ENCODE measurements at regions of chr9 and their contacts with region 1.

Region 1: GRCh38 chr9:115013998-115014397 is 83.6 kb upstream of the TNFSF8 start:
- DNase-seq: peak; percentile 57 to 84 (median 79)
- ATAC-seq: peak; percentile 88
- H3K4me3 ChIP-seq: no peak overlapping the region
- H3K4me3 Mint-ChIP-seq: peak overlapping the region in 1 of 10 donors; percentile 24
- H3K27ac ChIP-seq: no peak overlapping the region
- H3K27ac Mint-ChIP-seq: peak overlapping the region in 2 of 9 donors; percentile 12 to 79
- H3K4me1 ChIP-seq: peaks cover 0 to 4% of the 10 kb centered on the region in 2 donors
- H3K4me1 Mint-ChIP-seq: peaks cover 5 to 59% (median 12%) of the 10 kb centered on the region in 7 donors
- H3K27me3 ChIP-seq: no peaks in the 10 kb centered on the region
- H3K27me3 Mint-ChIP-seq: peaks cover 4 to 14% (median 7%) of the 10 kb centered on the region in 5 donors

Region 2: DNA sequence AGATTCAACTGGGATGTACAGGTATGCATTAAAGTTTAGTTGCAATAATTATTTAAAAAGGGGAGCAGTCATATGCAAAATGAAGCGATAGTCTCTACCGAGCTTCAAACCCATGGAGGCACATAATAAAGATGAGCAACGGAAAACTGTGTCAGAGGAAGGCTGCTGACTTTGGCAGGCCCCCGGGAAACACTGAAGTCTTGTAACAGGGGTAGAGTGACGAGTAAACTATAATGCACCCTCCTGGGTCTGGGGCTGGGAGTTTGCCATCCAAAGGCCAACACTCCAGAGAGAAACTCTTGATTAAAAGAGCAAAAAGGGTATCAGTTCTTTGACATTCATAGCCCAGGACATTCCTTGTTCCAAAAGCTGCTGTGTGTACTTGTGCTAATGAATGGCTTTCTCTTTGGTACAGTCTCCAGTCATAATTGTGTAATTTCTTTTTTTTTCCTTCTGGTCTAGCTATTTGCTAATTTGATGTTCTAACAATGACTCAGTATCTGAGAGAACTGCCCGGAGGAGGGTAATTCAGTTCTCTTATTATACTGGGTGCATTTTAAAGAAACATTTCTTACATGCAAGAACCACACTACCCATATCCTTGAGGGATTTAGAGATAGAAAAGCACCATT is 44.8 kb after region 1 on chr9:
- CTCF ChIA-PET with region 1: no interaction called
- POLR2A ChIA-PET with region 1: no interaction called
- intact Hi-C with region 1: no loop called
- DNase-seq: no peak
- ATAC-seq: no peak
- H3K4me3 ChIP-seq: no peak overlapping the region
- H3K4me3 Mint-ChIP-seq: no peak overlapping the region
- H3K27ac ChIP-seq: no peak overlapping the region
- H3K27ac Mint-ChIP-seq: no peak overlapping the region
- H3K4me1 ChIP-seq: no peaks in the 10 kb centered on the region
- H3K4me1 Mint-ChIP-seq: no peaks in the 10 kb centered on the region
- H3K27me3 ChIP-seq: no peaks in the 10 kb centered on the region
- H3K27me3 Mint-ChIP-seq: peaks cover 27 to 44% (median 33%) of the 10 kb centered on the region in 5 donors

Region 3: DNA sequence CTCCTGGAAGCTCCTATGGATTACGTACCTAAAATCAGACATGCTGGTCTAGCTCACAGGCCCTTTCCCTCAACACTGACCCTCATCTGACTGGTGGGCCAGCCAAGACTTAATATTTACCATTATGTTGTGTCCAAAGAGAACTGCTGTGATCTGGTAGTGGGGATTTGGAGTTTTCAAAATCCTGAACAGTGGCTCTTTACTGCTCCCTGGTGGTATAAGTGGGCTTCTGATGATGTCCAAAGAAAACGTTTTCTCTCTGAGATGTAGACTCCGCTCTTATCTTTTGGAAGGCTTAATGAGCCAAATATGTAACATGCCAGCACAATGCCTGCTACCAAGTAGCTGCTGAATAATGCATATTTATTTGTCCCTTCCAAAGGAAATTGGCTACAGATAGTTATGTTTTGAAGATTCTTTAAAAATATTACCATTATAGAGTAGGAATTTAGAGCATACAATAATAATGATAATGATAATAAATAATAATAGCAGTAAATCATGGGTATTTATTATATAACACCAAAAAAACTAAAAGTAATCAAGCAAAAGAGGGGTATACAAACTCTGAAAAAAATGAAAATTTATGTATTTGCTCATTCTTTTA is 510.6 kb after region 1 on chr9:
- CTCF ChIA-PET with region 1: no interaction called
- POLR2A ChIA-PET with region 1: no interaction called
- intact Hi-C with region 1: loop called (anchors 2 to 10 kb)
- DNase-seq: peak in 4 of 9 donors; percentile 4 to 16 (median 8)
- ATAC-seq: no peak
- H3K4me3 ChIP-seq: no peak overlapping the region
- H3K4me3 Mint-ChIP-seq: no peak overlapping the region
- H3K27ac ChIP-seq: no peak overlapping the region
- H3K27ac Mint-ChIP-seq: no peak overlapping the region
- H3K4me1 ChIP-seq: no peaks in the 10 kb centered on the region
- H3K4me1 Mint-ChIP-seq: no peaks in the 10 kb centered on the region
- H3K27me3 ChIP-seq: no peaks in the 10 kb centered on the region
- H3K27me3 Mint-ChIP-seq: peaks cover 12 to 35% (median 18%) of the 10 kb centered on the region in 5 donors

Measured in naive thymus-derived CD4-positive, alpha-beta T cell (primary cell).